A673 (cell line): ENCODE measurements at regions of chr2 and their contacts with region 1.

Region 1: GRCh38 chr2:171703574-171704347 is 16.5 kb downstream of the DYNC1I2 start:
- DNase-seq: peak; percentile 72
- H3K4me3 ChIP-seq: no peak overlapping the region
- H3K27ac ChIP-seq: peak overlapping the region; percentile 52
- H3K4me1 ChIP-seq: peaks cover 74% of the 10 kb centered on the region
- H3K27me3 ChIP-seq: no peaks in the 10 kb centered on the region
- CTCF ChIP-seq: peak; percentile 71

Region 2: GRCh38 chr2:171574149-171574795 is 129.5 kb before region 1 on chr2:
- CTCF ChIA-PET with region 1: no interaction called
- POLR2A ChIA-PET with region 1: no interaction called
- intact Hi-C with region 1: loop called (anchors 2 kb)
- DNase-seq: peak; percentile 83
- H3K4me3 ChIP-seq: no peak overlapping the region
- H3K27ac ChIP-seq: no peak overlapping the region
- H3K4me1 ChIP-seq: no peaks in the 10 kb centered on the region
- H3K27me3 ChIP-seq: no peaks in the 10 kb centered on the region
- CTCF ChIP-seq: peak; percentile 97

Region 3: DNA sequence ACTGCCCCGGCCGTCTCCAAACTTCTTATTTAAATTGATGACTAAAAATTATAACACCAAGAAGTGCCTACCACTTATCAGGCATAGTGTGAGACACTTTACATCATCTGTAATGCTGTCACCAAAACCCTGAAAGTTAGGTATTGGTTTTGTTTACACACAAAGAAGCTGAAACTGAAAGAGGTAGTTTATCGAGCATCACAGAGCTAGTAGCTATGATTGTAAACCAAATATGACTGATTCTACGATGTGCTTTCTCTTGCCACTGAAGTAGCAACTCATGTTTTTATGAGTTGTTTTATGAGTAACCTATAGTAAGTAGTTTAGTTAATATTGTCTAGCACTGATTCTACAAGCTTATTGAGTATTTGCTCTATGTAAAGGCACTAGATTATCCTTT is 15.0 kb after region 1 on chr2:
- CTCF ChIA-PET with region 1: no interaction called
- POLR2A ChIA-PET with region 1: no interaction called
- intact Hi-C with region 1: no loop called
- DNase-seq: no peak
- H3K4me3 ChIP-seq: no peak overlapping the region
- H3K27ac ChIP-seq: peak overlapping the region; percentile 10
- H3K4me1 ChIP-seq: peaks cover 69% of the 10 kb centered on the region
- H3K27me3 ChIP-seq: no peaks in the 10 kb centered on the region
- CTCF ChIP-seq: no peak

Region 4: DNA sequence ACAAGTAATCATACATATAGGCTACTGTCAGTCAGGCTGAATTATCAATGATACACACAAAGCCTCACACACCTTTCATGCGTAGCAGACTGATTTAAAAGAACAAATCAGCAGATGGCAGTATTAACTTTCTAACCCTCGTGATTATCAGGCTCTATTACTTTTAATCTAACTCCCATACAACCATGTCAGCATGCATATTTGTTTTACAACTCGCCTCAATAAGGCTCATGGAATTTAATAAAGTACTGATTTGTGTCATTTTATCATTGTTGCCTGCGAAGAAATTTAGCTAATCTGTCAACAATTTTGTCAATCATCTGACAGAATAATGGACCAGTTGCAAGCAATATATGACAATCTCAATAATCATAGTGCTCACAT is 107.5 kb after region 1 on chr2:
- CTCF ChIA-PET with region 1: no interaction called
- POLR2A ChIA-PET with region 1: no interaction called
- intact Hi-C with region 1: loop called (anchors 2 kb)
- DNase-seq: peak; percentile 67
- H3K4me3 ChIP-seq: no peak overlapping the region
- H3K27ac ChIP-seq: no peak overlapping the region
- H3K4me1 ChIP-seq: peaks cover 18% of the 10 kb centered on the region
- H3K27me3 ChIP-seq: no peaks in the 10 kb centered on the region
- CTCF ChIP-seq: peak; percentile 64

Region 5: GRCh38 chr2:172102391-172103278 is 398.9 kb after region 1 on chr2 and contains the start of gene DLX2:
- CTCF ChIA-PET with region 1: interaction called, 15 read pairs
- POLR2A ChIA-PET with region 1: no interaction called
- intact Hi-C with region 1: loop called (anchors 1 kb)
- DNase-seq: peak; percentile 98
- H3K4me3 ChIP-seq: peak within 1 kb of the TSS; percentile 81
- H3K27ac ChIP-seq: peak within 1 kb of the TSS; percentile 96
- H3K4me1 ChIP-seq: peaks cover 50% of the 10 kb centered on the region
- H3K27me3 ChIP-seq: no peaks in the 10 kb centered on the region
- CTCF ChIP-seq: peak; percentile 9; the same call in 1 of the 2 replicates
- total RNA-seq, gene DLX2: 18.3 and 20.4 TPM in 2 replicates

Region 6: DNA sequence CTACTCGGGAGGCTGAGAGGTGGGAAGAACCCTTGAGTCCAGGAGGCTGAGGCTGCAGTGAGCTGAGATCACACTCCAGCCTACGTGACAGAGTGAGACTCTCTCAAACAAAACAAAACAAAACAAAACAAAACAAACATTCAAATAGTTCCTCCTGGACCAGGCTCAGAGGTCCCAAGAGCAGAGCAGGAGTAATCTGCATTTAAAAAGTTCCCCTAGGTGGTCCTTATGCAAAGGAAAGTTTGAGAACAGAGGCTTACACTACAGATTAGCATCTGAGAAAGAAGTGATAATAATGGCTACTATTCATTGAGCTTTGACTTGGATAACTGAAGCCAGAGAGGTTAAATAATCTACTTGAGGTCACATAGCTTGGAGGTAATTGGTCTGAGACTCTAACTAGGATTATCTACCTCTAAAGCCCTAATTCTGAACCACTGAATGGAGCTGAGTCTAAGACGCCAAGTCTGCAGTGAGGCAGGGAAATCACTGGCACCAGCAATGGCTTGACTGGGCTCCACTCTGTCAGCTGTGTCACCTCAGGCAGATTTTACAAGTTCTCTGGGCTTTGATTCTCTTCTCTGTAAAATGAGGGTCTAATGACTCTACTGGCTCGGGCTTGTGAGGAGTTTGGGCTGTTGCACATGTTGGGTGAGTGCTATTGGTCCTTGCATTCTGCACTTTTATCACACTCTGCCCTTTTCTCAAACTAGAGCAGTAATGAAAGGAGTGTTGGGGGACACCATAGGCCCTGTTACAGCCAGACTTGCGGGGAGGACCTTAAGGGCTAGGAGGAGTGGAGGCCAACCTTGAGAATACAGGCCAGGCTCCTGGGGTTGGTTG is 428.2 kb after region 1 on chr2:
- CTCF ChIA-PET with region 1: interaction called, 11 read pairs
- POLR2A ChIA-PET with region 1: no interaction called
- intact Hi-C with region 1: no loop called
- DNase-seq: no peak
- H3K4me3 ChIP-seq: no peak overlapping the region
- H3K27ac ChIP-seq: no peak overlapping the region
- H3K4me1 ChIP-seq: no peaks in the 10 kb centered on the region
- H3K27me3 ChIP-seq: no peaks in the 10 kb centered on the region
- CTCF ChIP-seq: no peak